Pancreas (tissue), 10 donors: ENCODE measurements at regions of chr7 and their contacts with region 1.

Region 1: DNA sequence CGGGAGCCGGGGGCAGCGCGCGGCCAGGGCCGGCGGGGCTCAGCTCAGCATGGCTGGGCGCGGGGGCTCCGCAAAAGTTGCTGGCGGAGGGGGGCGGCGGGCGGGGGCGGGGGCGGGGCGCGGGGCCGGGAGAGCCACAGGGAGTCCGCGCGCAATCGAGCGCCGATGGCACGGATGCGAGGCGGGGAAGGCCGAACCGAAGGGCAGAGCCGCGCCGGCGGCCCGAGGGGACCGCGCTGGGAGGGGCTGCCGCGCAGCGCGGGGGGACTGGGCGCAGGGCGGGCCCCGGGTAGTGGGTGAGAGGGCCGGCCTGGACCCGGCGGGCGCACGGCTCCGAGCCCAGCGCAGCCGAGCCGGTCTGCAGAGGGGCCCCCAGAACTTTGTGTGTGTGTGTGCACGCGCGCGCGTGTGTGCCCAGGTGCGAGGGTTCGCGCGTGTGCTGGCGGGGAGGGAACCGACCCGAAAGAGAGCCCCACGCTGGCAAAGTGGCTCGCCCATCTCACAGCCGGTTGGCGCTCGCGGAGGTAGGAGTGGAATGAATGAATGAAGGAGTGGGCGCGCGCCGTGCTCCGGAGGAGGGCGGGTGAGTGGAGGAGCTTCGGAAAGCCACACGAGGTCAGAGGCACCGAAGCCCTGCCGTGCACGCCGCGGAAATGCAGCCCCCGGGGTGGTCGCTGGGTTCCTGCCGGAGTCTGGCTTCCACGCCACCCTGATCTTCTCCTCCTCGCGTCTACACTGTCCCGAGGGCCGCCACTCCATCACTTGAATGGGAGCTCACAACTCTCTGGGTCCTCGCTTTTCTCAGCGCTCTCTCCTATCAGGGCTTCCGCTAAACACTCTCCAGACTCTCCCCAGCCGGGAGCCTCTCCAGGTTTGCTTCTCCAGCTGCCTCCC is at the start of gene HIPK2:
- DNase-seq: peak; percentile 67 to 88 (median 80)
- ATAC-seq: peak; percentile 72 to 85 (median 74)
- H3K4me3 ChIP-seq: peak within 1 kb of the TSS; percentile 49 to 93 (median 88)
- H3K27ac ChIP-seq: peak within 1 kb of the TSS; percentile 57 to 92 (median 80)
- H3K4me1 ChIP-seq: peaks cover 5 to 21% (median 13%) of the 10 kb centered on the region in 3 donors
- H3K27me3 ChIP-seq: no peaks in the 10 kb centered on the region
- CTCF ChIP-seq: no peak
- total RNA-seq, gene HIPK2: 21.4 to 49.0 (median 26.5) TPM

Region 2: GRCh38 chr7:139995017-139995931 is 217.1 kb after region 1 on chr7:
- intact Hi-C with region 1: loop called in 2 of 3 experiments (anchors 10 kb)
- DNase-seq: peak in 4 of 6 donors; percentile 25 to 53 (median 38)
- ATAC-seq: peak; percentile 48 to 85 (median 74)
- H3K4me3 ChIP-seq: no peak overlapping the region
- H3K27ac ChIP-seq: no peak overlapping the region
- H3K4me1 ChIP-seq: no peaks in the 10 kb centered on the region
- H3K27me3 ChIP-seq: no peaks in the 10 kb centered on the region
- CTCF ChIP-seq: no peak